ENCODE measurements at regions of chr6 and their contacts with region 1.

Region 1: GRCh38 chr6:16128759-16129622 is at the start of gene MYLIP:
- DNase-seq: peak; percentile 97
- ATAC-seq: peak; percentile 78
- H3K4me3 Mint-ChIP-seq: peak within 1 kb of the TSS; percentile 92
- H3K27ac Mint-ChIP-seq: peak within 1 kb of the TSS; percentile 95
- H3K4me1 Mint-ChIP-seq: peaks cover 22% of the 10 kb centered on the region
- H3K27me3 Mint-ChIP-seq: peaks cover 22% of the 10 kb centered on the region
- total RNA-seq, gene MYLIP: 25.8 to 27.0 TPM

Region 2: DNA sequence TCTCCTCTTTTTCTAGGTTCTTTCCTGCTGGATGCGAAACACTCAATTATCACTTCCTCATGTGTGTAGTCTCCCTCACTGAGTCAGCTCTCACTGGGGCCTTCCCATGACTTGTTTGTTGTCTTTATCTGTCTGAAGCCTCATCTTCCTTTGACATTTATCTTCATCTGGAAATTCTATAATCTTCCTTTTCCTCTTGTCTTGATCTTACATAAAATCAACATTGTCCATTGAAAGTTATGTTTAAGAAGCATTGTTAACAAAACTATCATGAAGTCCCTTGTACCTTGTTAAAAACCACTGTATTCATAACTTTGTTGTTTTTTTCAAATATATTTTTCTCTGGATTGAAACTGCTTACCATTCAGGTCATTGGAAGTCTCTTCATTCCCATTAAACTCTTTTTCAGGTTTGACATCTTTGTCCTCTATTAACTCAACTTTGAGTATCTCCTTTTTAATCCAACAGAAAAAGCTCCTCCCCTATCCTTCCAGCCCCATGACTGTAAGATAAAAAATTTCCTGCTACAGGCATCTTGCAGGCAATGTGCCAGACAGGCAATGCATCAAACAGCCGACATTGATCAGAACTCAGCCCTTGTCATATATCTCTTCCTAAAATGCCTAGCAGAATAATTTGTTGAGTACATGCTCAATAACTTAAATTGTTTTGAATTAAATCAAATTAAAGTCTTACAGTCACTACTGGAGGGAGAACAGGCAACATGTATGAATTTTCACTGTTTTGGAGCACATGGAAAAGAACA is 34.7 kb after region 1 on chr6:
- POLR2A ChIA-PET with region 1: interaction called, 12 read pairs
- DNase-seq: no peak
- ATAC-seq: no peak
- H3K4me3 Mint-ChIP-seq: no peak overlapping the region
- H3K27ac Mint-ChIP-seq: no peak overlapping the region
- H3K4me1 Mint-ChIP-seq: peaks cover 32% of the 10 kb centered on the region
- H3K27me3 Mint-ChIP-seq: peaks cover 10% of the 10 kb centered on the region

Region 3: DNA sequence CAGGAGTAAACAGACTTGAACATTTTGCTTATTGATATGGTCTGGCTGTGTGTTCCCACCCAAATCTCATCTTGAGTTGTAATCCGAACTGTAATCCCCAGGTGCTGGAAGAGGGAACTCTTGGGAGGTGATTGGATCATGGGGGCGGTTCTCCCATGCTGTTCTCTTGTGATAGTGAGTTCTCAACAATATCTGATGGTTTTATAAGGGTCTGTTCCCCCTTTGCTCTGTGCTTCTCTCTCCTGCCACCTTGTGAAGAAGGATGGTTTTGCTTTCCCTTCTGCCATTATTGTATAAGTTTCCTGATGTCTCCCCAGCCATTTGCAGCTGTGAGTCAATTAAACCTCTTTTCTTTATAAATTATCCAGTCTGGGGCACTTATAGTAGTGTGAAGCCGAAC is 39.9 kb after region 1 on chr6:
- POLR2A ChIA-PET with region 1: interaction called, 11 read pairs
- DNase-seq: no peak
- ATAC-seq: peak; percentile 67
- H3K4me3 Mint-ChIP-seq: peak overlapping the region; percentile 32
- H3K27ac Mint-ChIP-seq: no peak overlapping the region
- H3K4me1 Mint-ChIP-seq: peaks cover 24% of the 10 kb centered on the region
- H3K27me3 Mint-ChIP-seq: peaks cover 13% of the 10 kb centered on the region

Region 4: DNA sequence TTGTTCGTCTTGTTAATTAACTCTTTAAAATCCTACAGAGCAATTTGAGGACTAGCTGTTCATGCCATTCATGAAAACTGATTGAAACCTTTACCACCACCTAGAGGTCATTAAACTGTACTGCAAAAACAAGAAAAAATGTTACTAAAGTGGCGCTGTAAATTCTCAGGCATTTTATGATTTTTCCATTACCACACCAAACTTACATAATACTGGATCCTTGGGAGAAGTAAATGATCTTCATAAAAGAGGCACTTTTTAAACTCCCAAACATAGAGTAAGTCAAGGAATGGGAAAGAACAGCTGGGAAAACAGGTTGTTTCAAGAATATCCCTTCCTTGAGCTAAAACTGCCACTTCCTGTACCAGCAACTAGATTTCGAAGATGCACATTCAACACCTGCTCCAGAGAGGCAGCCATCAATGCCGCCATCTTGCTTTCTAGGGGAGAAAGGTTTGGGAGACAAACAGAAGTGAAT is 54.2 kb after region 1 on chr6:
- POLR2A ChIA-PET with region 1: interaction called, 31 read pairs
- DNase-seq: no peak
- ATAC-seq: no peak
- H3K4me3 Mint-ChIP-seq: no peak overlapping the region
- H3K27ac Mint-ChIP-seq: no peak overlapping the region
- H3K4me1 Mint-ChIP-seq: peaks cover 25% of the 10 kb centered on the region
- H3K27me3 Mint-ChIP-seq: peaks cover 11% of the 10 kb centered on the region

Region 5: DNA sequence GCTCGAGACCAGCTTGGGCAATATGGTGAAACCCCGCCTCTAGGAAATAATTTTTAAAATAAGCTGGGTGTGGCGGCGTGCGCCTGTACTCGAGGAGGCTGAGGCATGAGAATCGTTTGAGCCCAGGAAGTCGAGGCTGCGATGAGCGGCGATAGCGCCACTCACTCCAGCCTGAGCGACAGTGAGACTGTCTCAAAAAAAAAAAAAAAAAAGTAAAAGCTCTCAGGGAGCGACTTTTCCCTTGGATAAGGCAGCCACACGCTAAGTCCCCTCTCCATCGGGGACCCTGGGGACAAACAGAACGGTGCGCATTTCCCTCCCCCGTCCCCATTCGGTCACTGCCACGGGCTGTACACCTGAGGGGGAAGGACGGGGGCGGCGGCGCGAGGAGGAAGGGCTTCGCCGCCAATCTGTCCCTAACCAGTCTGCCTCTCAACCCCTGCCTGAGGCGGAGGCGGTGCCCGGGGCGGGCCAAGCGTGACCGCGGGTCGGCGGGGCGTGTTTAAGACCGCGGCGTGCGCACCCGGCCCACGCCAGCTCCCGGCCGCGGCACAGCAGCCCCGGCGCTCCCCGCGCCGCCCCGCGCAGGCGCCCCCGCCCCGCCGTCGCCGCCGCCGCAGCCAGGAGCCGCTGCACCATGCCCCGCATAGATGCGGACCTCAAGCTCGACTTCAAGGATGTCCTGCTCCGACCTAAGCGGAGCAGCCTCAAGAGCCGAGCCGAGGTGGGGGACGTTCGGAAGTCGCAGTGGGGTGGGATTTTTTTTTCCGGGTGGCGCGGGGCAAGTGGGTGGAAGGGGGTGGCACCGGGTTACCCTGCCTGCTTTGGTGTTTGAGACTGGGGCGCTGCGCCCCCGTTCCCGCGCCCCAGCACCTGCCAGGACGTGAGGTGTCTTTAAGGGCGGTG is 109.3 kb after region 1 on chr6 and contains the start of gene GMPR:
- POLR2A ChIA-PET with region 1: interaction called, 20 read pairs
- DNase-seq: peak; percentile 89
- ATAC-seq: peak; percentile 95
- H3K4me3 Mint-ChIP-seq: peak within 1 kb of the TSS; percentile 94
- H3K27ac Mint-ChIP-seq: peak within 1 kb of the TSS; percentile 88
- H3K4me1 Mint-ChIP-seq: peaks cover 30% of the 10 kb centered on the region
- H3K27me3 Mint-ChIP-seq: peaks cover 13% of the 10 kb centered on the region
- total RNA-seq, gene GMPR: 11.0 to 14.0 TPM

Region 6: GRCh38 chr6:17808609-17809008 is 1679.6 kb after region 1 on chr6:
- POLR2A ChIA-PET with region 1: no interaction called
- DNase-seq: no peak
- ATAC-seq: no peak
- H3K4me3 Mint-ChIP-seq: no peak overlapping the region
- H3K27ac Mint-ChIP-seq: no peak overlapping the region
- H3K4me1 Mint-ChIP-seq: peaks cover 3% of the 10 kb centered on the region
- H3K27me3 Mint-ChIP-seq: peaks cover 22% of the 10 kb centered on the region

Measured in activated naive CD8-positive, alpha-beta T cell treated with anti-CD3 and anti-CD28 coated beads, Interleukin-2, amount 10 ng/mL, durations not matched to agents 7 days and 5 days (primary cell).